Ascending aorta (tissue), 2 donors: ENCODE measurements at regions of chr19 and their contacts with region 1.

Region 1: DNA sequence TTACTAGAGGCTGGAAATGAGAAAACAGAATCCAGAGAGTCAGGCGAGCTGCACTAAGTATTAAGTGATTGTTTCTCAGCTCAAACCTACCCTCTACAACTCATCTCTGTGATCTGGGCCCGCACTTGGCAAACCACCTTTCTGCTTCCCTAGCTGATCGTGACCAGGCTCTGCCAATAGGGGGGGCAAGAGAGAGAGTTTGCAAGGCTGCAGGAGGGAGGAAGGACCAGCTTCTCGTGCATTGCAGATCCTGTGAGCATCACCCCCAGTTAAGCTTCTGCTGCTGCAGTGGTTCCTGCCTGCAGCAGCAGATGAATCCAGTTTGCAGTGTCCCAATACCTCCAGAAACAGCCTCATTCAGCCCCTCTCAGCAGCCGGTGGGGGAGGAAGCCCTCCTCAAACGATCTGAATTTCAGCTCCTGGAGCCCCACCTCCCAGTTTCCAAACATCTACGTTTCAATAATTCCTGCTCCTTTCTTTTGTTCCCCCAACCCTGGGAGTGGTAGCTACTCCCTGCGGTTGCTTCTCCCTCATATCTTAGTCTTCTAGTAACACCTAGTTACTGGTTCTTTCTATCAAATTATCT is 20.0 kb downstream of the XRCC1 start:
- DNase-seq: peak in 1 of 2 donors; percentile 79
- H3K4me3 ChIP-seq: no peak overlapping the region
- H3K27ac ChIP-seq: no peak overlapping the region
- H3K4me1 ChIP-seq: no peaks in the 10 kb centered on the region
- H3K27me3 ChIP-seq: no peaks in the 10 kb centered on the region
- CTCF ChIP-seq: peak; percentile 35 to 58 (median 55)

Region 2: GRCh38 chr19:43489310-43489709 is 66.0 kb before region 1 on chr19:
- intact Hi-C with region 1: no loop called
- DNase-seq: no peak
- H3K4me3 ChIP-seq: no peak overlapping the region
- H3K27ac ChIP-seq: no peak overlapping the region
- H3K4me1 ChIP-seq: no peaks in the 10 kb centered on the region
- H3K27me3 ChIP-seq: no peaks in the 10 kb centered on the region
- CTCF ChIP-seq: no peak

Region 3: GRCh38 chr19:43651758-43652545 is 96.7 kb after region 1 on chr19:
- intact Hi-C with region 1: loop called (anchors 5 kb)
- DNase-seq: no peak
- H3K4me3 ChIP-seq: no peak overlapping the region
- H3K27ac ChIP-seq: no peak overlapping the region
- H3K4me1 ChIP-seq: no peaks in the 10 kb centered on the region
- H3K27me3 ChIP-seq: no peaks in the 10 kb centered on the region
- CTCF ChIP-seq: peak; percentile 48 to 78 (median 49)